Breast epithelium (tissue), 4 donors: ENCODE measurements at regions of chrX and their contacts with region 1.

Region 1: GRCh38 chrX:47863187-47863586 is 26.5 kb downstream of the ZNF81 start:
- DNase-seq: peak in 1 of 2 donors; percentile 52
- H3K4me3 ChIP-seq: no peak overlapping the region
- H3K27ac ChIP-seq: no peak overlapping the region
- H3K4me1 ChIP-seq: no peaks in the 10 kb centered on the region
- H3K27me3 ChIP-seq: peaks cover 0 to 33% of the 10 kb centered on the region in 2 donors
- CTCF ChIP-seq: no peak
- POLR2A ChIP-seq: no peak

Region 2: DNA sequence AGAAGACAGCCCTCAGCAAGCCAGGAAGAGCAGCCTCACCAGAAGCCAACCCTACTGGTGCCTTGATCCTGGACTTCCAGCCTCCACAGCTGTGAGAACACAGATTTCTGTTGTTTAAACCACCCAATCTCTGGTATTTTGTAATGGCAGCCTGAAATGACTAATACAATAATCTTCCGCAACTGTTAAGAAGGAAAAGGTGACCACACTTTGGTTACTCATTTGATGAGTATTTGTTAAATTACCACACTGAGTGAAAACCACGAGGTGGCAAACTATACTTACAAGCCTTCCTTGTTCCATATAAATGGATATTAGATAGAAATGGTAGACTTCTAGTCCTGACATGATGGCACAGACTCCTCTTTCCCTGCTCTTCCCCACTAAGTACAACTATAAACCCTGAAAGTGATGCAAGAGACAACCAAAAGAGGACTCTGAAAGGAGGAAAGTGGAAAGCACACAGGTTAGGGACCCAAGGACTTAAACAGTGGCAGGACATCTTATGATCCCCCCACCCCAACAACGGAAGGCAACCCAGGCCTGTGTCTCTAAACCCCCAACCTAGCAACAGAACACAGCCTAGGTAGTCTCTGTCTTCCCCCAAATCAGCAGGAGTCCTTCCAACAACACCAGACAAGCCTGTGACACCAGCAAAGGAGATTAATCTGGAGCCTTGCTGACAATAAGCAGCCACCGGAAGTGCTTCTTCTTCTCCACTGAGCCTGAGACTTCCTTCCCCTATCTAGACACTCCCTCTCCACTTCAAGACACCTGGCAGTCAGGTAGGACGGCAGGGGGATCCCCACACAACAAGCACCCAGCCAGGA is 128.3 kb after region 1 on chrX:
- intact Hi-C with region 1: loop called (anchors 10 kb)
- DNase-seq: no peak
- H3K4me3 ChIP-seq: no peak overlapping the region
- H3K27ac ChIP-seq: no peak overlapping the region
- H3K4me1 ChIP-seq: no peaks in the 10 kb centered on the region
- H3K27me3 ChIP-seq: peaks cover 0 to 4% of the 10 kb centered on the region in 2 donors
- CTCF ChIP-seq: no peak
- POLR2A ChIP-seq: no peak